ENCODE measurements at regions of chr12 and their contacts with region 1.

Region 1: DNA sequence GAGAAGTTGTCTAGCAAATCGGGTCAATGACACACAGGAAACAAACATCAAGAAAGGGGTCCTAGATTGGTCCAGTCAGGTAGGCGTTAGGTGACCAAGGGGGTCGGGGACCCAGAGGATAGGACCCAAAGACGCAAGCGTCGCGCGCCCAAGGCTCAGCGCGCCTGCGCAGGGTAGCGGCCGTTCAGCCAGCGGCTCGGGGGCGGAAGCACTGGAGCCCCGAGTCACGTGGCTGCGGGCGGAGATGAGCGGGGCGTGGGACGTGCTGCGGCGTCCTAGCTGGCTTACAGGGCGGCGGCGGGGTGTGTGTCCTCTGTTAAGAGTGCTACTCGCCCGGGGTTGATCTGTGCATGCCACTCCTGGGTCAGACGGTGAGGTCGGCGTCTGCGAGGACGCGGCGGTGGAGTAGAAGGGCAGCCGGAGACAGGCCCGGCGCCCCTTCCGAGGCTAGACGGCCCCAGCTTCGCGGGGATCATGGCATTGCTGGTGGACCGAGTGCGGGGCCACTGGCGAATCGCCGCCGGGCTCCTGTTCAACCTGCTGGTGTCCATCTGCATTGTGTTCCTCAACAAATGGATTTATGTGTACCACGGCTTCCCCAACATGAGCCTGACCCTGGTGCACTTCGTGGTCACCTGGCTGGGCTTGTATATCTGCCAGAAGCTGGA is at the start of gene SLC35E3:
- DNase-seq: peak; percentile 58
- ATAC-seq: peak; percentile 99
- H3K4me3 ChIP-seq: peak within 1 kb of the TSS; percentile 75 to 98
- H3K27ac ChIP-seq: peak within 1 kb of the TSS; percentile 97
- H3K4me1 ChIP-seq: peaks cover 8% of the 10 kb centered on the region; the same call in 1 of the 2 replicates
- H3K27me3 ChIP-seq: no peaks in the 10 kb centered on the region
- CTCF ChIP-seq: no peak
- total RNA-seq, gene SLC35E3: 15.9 TPM

Region 2: GRCh38 chr12:68638171-68638570 is 107.9 kb before region 1 on chr12:
- CTCF ChIA-PET with region 1: no interaction called
- POLR2A ChIA-PET with region 1: interaction called, 11 read pairs
- in situ Hi-C with region 1: no loop called
- intact Hi-C with region 1: no loop called
- DNase-seq: no peak
- ATAC-seq: no peak
- H3K4me3 ChIP-seq: no peak overlapping the region
- H3K27ac ChIP-seq: peak overlapping the region; percentile 63
- H3K4me1 ChIP-seq: peaks cover 90% of the 10 kb centered on the region
- H3K27me3 ChIP-seq: no peaks in the 10 kb centered on the region
- CTCF ChIP-seq: no peak

Region 3: DNA sequence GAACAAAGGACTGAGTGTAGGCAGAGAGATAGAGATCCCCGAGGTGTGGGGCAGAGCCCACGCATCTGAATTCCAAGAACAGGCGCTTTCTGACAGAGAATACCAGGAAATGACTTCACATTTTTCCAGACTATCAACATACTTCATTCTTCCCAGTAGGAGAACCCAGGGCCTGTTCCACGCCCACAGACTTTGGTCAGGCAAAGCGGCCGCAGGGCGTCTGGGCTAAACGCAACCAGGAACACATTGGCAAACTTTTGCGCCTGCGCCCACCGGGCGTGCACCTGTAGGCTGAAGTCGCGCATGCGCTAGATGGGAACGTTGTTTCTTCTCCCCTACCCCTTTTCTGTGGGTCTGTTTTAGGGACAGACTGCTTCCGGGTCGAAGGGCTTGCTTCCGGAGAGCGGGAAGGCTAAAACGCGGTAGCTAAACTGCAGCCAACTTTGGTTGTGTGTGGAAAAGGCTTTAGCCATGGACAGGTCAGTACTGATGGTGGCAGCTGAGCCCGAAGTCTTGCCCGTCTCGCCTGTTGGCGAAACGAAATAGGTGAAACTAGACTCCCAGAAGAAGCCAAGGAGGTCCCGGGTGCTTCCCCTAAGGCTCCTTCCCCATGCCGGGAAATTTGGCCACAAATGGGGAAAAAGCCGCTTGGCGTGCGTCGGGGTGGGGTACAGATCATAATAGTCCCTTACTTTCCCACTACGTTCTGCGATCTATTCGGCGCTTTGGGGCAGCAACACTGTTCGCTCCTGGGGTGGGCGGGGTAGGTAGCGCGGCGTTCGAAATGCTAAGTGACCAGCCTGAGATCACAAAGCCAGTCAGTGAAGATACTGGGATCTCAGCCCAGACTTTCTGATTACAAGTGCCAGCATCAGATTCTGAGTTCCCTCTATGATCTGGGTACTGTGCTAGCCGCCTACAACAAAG is 59.2 kb before region 1 on chr12 and contains the start of gene NUP107:
- CTCF ChIA-PET with region 1: interaction called, 10 read pairs
- POLR2A ChIA-PET with region 1: no interaction called
- in situ Hi-C with region 1: no loop called
- intact Hi-C with region 1: no loop called
- DNase-seq: peak; percentile 89
- ATAC-seq: peak; percentile 99
- H3K4me3 ChIP-seq: peak within 1 kb of the TSS; percentile 87 to 95
- H3K27ac ChIP-seq: peak within 1 kb of the TSS; percentile 98
- H3K4me1 ChIP-seq: peaks cover 21% of the 10 kb centered on the region
- H3K27me3 ChIP-seq: no peaks in the 10 kb centered on the region
- CTCF ChIP-seq: no peak
- total RNA-seq, gene NUP107: 82.3 TPM

Region 4: DNA sequence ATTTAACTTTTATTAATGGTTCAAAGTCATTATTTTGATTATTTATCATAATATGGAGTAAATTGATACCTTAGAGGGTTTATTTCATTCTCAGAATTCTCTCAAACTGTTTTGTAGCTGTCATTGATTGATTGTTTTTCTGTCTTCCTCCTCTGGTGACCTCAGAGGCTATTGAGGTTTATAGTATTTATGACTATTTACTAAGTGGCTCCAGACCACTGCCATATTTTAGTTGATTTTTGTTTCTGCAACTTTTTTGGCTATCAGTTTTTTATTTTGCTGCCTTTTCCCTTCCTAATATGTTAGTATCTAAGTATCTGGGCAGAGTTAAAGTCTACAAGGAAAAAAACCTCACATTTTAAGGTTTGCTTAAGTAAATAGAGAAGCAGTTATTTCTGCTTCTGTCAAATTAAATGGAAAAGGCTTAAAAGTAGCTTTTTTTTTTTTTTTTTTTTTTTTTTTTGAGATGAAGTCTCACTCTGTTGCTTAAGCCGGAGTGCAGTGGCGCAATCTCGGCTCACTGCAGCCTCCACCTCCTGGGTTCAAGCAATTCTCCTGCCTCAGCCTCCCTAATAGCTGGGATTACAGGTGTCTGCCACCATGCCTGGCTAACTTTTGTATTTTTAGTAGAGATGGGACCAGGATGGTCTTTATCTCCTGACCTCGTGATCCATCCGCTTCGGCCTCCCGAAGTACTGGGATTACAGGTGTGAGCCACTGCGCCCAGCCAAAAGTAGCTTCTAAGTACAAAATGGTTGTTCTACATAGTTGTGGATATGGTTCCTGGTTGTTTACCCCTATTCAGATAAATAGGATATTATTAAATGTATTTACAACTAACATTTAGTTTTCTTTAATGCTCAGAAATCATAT is 70.1 kb after region 1 on chr12:
- CTCF ChIA-PET with region 1: no interaction called
- POLR2A ChIA-PET with region 1: interaction called, 10 read pairs
- in situ Hi-C with region 1: no loop called
- intact Hi-C with region 1: no loop called
- DNase-seq: no peak
- ATAC-seq: no peak
- H3K4me3 ChIP-seq: no peak overlapping the region
- H3K27ac ChIP-seq: no peak overlapping the region
- H3K4me1 ChIP-seq: peaks cover 8% of the 10 kb centered on the region
- H3K27me3 ChIP-seq: no peaks in the 10 kb centered on the region
- CTCF ChIP-seq: no peak

Region 5: DNA sequence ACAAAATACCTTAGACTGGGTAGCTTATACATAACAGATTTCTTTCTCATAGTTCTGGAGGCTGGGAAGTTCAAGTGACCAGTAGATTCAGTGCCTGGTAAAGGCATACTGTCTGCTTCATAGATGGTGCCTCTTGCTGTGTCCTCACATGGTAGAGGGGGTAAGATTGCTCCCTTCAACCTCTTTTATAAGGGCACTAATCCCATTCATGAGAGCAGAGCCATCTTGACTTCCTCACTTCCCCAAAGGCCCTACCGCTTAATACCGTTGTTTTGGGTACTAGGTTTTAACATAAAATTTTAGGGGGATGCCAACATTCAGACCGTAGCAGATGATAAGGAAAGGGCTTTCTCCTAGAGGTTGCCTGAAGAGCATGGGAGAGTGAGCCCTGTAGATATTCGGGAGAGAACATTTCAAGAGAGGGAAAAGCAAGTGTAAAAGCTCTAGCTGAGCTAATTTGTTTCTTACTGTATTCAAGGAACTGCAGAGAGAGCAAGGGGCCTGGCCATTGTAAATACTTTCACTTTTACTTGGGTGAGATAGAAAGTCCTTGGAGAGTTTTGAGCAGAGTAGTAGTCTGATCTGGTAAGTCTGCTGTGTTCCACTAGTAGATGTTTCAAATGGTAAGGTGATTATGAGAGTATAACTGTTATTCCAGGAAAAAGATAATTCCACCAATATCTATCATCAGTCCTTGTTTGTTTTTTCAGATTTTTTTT is 751.4 kb after region 1 on chr12:
- CTCF ChIA-PET with region 1: no interaction called
- POLR2A ChIA-PET with region 1: no interaction called
- in situ Hi-C with region 1: no loop called
- intact Hi-C with region 1: no loop called
- DNase-seq: no peak
- ATAC-seq: peak; percentile 57
- H3K4me3 ChIP-seq: no peak overlapping the region
- H3K27ac ChIP-seq: 0 out of 2 replicates have a peak overlapping the region, but pooled peaks have one; percentile 3
- H3K4me1 ChIP-seq: peaks cover 19% of the 10 kb centered on the region
- H3K27me3 ChIP-seq: no peaks in the 10 kb centered on the region
- CTCF ChIP-seq: no peak

Measured in Panc1 (cell line).